GM13977 (cell line): ENCODE measurements at regions of chr16 and their contacts with region 1.

Region 1: DNA sequence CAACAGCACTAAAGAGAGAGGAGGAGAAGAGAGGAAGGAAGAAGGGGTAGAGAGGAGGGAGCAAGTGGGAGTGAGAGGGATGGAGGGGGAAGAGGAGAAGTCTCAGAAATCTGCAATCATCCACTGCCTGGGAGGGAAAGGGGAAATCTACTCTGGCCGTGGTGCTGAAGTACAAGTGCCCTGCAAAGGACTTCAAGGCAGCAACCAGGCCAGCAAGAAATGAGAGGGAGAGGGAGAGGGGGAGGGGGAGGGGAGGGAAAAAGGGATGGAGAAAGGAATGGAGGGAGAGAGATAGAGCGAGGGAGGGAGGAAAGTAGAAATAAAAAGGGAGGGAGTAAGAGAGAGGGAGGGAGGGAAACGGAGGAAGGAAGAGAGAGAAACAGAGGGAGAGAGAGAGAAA is 130.8 kb upstream of the EEF2KMT start:
- DNase-seq: no peak
- CTCF ChIP-seq: no peak

Region 2: DNA sequence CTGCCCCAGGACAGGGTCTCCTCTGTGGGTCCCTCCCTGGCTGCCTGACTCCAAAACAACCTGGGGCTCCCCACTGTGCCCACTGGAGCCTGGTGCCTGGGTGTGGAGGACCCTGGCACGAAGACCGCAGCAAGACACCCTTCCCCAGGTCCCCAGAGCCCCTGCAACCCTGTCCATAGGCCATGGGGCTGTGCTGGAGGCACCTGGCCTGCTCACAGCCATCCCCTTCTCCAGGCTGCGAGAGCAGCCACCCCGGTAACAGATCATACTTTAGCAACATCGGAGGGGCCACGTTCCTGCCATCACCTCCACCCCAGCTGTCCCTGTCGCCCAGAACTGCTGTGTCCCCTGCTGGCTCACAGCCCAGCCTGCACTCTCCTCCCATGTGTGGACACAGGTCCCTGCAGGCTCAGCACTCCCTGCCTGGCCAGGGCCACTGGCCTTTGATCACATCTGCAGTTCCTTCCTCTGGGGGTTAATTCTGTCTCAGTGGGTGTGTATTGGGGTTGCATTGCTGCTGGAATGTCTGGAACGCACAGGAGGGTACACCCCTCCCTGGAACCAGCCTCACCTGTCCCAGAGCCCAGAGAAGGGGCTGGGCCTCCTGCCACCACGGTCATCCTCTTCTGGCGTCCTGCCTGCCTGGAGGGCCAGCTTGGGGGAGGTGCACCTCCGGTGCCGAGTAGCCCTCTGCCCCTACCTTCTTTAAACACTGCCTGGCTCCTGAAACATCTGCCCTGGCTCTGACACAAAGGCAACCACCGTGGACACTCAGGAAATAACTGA is 303.6 kb before region 1 on chr16:
- in situ Hi-C with region 1: no loop called
- DNase-seq: no peak
- CTCF ChIP-seq: no peak

Region 3: GRCh38 chr16:5461141-5461540 is 232.8 kb after region 1 on chr16:
- in situ Hi-C with region 1: no loop called
- DNase-seq: no peak
- CTCF ChIP-seq: no peak

Region 4: DNA sequence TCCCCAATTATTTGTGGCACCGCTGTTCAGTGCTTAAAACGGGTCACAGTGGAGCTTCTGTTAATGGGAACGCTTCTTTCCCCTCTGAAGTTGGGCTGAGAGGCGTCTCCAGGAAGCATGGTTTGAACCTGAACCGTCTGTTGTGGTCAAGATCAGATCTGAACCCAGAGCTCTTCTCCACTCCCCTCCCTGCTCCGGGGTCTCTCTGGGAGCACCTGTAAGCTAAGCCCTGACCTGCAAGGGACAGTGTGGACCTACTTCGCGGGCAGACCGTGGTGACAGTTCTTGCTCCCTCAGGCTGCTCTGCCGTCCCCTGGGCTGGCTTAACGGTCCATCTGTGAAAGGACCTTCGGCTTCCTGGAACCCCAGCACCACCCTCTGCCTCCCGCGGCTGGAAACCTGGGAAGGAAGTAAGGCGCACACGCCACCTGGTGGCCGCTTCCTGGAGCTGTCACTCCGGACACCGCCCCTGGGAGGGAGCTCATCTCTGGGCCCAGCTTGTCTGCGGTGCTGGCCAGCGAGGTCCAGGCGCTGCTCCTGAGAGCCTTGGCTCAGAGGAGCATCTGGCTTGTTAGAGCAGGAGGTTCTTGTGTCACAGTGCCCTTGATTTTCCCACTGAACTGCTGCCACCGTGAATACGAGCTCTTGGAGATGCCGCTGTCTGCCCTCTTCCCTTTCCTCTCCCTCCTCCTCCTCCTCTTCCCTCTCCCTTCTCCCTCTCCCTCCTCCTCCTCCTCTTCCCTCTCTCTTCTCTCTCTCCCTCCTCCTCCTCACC is 387.7 kb after region 1 on chr16:
- in situ Hi-C with region 1: loop called (anchors 25 kb)
- DNase-seq: peak; percentile 35
- CTCF ChIP-seq: peak; percentile 67